Heart left ventricle (tissue), 16 donors: ENCODE measurements at regions of chr22 and their contacts with region 1.

Region 1: GRCh38 chr22:42868751-42869251 is 11.7 kb upstream of the ARFGAP3 start:
- DNase-seq: peak; percentile 67 to 83 (median 78)
- ATAC-seq: peak; percentile 62 to 80 (median 73)
- H3K4me3 ChIP-seq: no peak overlapping the region
- H3K27ac ChIP-seq: peak overlapping the region in 10 of 12 donors; percentile 11 to 80 (median 56)
- H3K4me1 ChIP-seq: peaks cover 0 to 22% (median 12%) of the 10 kb centered on the region in 12 donors
- H3K27me3 ChIP-seq: no peaks in the 10 kb centered on the region
- CTCF ChIP-seq: no peak
- POLR2A ChIP-seq: no peak

Region 2: DNA sequence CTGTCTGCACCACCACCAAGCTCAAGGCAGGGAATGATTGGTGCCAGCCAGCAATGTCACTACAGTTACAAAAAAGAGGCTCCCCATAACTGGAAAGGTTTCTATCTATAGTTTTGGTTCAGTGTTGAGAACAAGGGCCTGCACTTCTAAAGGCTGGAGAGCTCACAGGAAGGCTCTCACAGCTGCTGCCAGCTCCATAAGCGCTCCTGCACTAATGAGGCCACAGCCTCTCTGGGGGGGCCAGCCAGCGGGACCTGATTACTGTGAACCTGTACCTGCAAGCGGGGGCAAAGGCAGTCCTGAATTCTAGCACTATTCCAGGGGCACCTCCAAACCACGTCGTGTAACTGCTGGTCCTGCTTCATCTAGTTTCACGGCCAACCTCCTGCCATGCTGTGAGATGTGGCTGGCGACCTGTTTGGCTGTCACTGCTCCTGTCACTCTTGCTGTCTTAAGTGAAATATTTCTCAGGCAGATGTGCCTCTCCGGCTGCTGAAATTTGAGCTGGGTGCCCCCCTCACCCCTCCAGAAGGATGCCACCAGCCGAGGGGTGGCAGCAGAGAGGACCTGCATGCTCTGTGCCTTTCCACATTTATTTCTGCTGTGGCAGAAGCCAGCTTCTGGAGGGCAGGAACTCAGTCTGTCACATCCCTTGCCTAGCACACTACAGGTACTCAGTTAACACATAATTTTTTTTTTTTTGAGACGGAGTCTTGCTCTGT is 41.6 kb after region 1 on chr22:
- intact Hi-C with region 1: loop called in 2 of 10 experiments (anchors 5 kb)
- DNase-seq: peak in 1 of 5 donors; percentile 66
- ATAC-seq: peak; percentile 12 to 52 (median 41)
- H3K4me3 ChIP-seq: no peak overlapping the region
- H3K27ac ChIP-seq: peak overlapping the region; percentile 47 to 85 (median 75)
- H3K4me1 ChIP-seq: peaks cover 20 to 95% (median 67%) of the 10 kb centered on the region in 12 donors
- H3K27me3 ChIP-seq: no peaks in the 10 kb centered on the region
- CTCF ChIP-seq: peak in 10 of 12 donors; percentile 5 to 49 (median 32)
- POLR2A ChIP-seq: no peak

Region 3: GRCh38 chr22:42967933-42968332 is 99.1 kb after region 1 on chr22:
- intact Hi-C with region 1: loop called in 4 of 10 experiments (anchors 5 to 10 kb)
- DNase-seq: peak; percentile 61 to 85 (median 77)
- ATAC-seq: peak; percentile 67 to 88 (median 84)
- H3K4me3 ChIP-seq: no peak overlapping the region
- H3K27ac ChIP-seq: peak overlapping the region in 1 of 12 donors; percentile 1
- H3K4me1 ChIP-seq: peaks cover 0 to 45% (median 18%) of the 10 kb centered on the region in 12 donors
- H3K27me3 ChIP-seq: no peaks in the 10 kb centered on the region
- CTCF ChIP-seq: peak in 9 of 12 donors; percentile 22 to 57 (median 44)
- POLR2A ChIP-seq: no peak

Region 4: GRCh38 chr22:43036282-43036829 is 167.6 kb after region 1 on chr22:
- intact Hi-C with region 1: loop called in 9 of 10 experiments (anchors 1 to 10 kb)
- DNase-seq: peak; percentile 72 to 83 (median 78)
- ATAC-seq: peak; percentile 83 to 96 (median 88)
- H3K4me3 ChIP-seq: peak overlapping the region in 6 of 12 donors; percentile 6 to 29 (median 18)
- H3K27ac ChIP-seq: peak overlapping the region in 9 of 12 donors; percentile 30 to 67 (median 57)
- H3K4me1 ChIP-seq: peaks cover 0 to 15% (median 0%) of the 10 kb centered on the region in 12 donors
- H3K27me3 ChIP-seq: no peaks in the 10 kb centered on the region
- CTCF ChIP-seq: no peak
- POLR2A ChIP-seq: no peak